T-cell (primary cell): ENCODE measurements at regions of chr11 and their contacts with region 1.

Region 1: DNA sequence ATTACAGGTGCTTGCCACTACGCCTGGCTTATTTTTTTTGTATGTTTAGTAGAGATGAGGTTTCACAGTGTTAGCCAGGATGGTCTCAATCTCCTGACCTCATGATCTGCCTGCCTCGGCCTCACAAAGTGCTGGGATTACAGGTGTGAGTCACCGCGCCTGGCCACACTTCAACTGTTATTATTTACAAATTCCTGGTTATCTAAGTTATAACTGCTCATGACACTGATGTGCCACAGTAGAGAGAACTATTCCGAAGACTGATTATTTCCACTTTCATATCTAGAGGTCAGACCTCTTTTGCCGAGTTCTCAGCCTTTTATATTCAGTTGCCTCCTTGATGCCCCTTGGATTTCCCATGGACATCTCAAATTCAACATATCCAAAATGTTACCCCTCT is 3.9 kb upstream of the NUP160 start:
- DNase-seq: no peak
- ATAC-seq: no peak
- H3K4me3 ChIP-seq: no peak overlapping the region
- H3K4me3 Mint-ChIP-seq: peak overlapping the region in 1 of 3 donors; percentile 28
- H3K27ac ChIP-seq: peak overlapping the region; percentile 68
- H3K27ac Mint-ChIP-seq: peak overlapping the region; percentile 96
- H3K4me1 ChIP-seq: peaks cover 28 to 38% of the 10 kb centered on the region in 2 experiments
- H3K4me1 Mint-ChIP-seq: peaks cover 38 to 54% (median 42%) of the 10 kb centered on the region in 3 donors
- H3K27me3 ChIP-seq: no peaks in the 10 kb centered on the region
- H3K27me3 Mint-ChIP-seq: no peaks in the 10 kb centered on the region

Region 2: DNA sequence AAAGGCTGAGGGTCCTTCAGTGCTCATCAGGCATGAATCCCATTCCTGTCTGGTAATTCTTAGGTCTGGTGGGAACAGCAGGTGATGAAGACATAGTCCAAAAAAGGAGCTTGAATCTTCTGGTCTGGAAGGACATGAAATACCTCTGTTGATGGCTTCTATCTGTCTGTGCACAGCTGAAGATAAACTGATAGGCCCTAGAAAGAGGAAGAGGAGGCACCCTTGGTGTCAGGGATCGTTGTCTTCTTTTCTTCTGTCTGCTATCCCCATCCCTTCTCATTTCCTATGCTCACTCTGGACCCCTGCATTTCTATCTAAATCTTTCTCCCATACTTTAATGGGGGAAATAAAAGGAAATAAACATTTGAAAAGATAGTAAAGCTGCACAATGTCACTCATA is 146.3 kb before region 1 on chr11:
- CTCF ChIA-PET with region 1: interaction called in 1 of 2 experiments, 3 read pairs
- POLR2A ChIA-PET with region 1: interaction called in 1 of 2 experiments, 10 read pairs
- DNase-seq: no peak
- ATAC-seq: no peak
- H3K4me3 ChIP-seq: no peak overlapping the region
- H3K4me3 Mint-ChIP-seq: no peak overlapping the region
- H3K27ac ChIP-seq: no peak overlapping the region
- H3K27ac Mint-ChIP-seq: no peak overlapping the region
- H3K4me1 ChIP-seq: no peaks in the 10 kb centered on the region
- H3K4me1 Mint-ChIP-seq: peaks cover 0 to 3% (median 0%) of the 10 kb centered on the region in 3 donors
- H3K27me3 ChIP-seq: no peaks in the 10 kb centered on the region
- H3K27me3 Mint-ChIP-seq: no peaks in the 10 kb centered on the region